Activated CD4-positive, alpha-beta T cell treated with anti-CD3 and anti-CD28 coated beads, Interleukin-2, amount 10 ng/mL, durations not matched to agents 24 days and 14 days (primary cell): ENCODE measurements at regions of chr11 and their contacts with region 1.

Region 1: GRCh38 chr11:85718991-85719807 is 33.2 kb upstream of the CCDC89 start:
- DNase-seq: no peak
- H3K4me3 Mint-ChIP-seq: no peak overlapping the region
- H3K27ac Mint-ChIP-seq: no peak overlapping the region
- H3K4me1 Mint-ChIP-seq: peaks cover 5% of the 10 kb centered on the region
- H3K27me3 Mint-ChIP-seq: no peaks in the 10 kb centered on the region

Region 2: GRCh38 chr11:84673753-84674152 is 1045.4 kb before region 1 on chr11:
- intact Hi-C with region 1: loop called (anchors 10 kb)
- DNase-seq: no peak
- H3K4me3 Mint-ChIP-seq: no peak overlapping the region
- H3K27ac Mint-ChIP-seq: no peak overlapping the region
- H3K4me1 Mint-ChIP-seq: no peaks in the 10 kb centered on the region
- H3K27me3 Mint-ChIP-seq: no peaks in the 10 kb centered on the region

Region 3: DNA sequence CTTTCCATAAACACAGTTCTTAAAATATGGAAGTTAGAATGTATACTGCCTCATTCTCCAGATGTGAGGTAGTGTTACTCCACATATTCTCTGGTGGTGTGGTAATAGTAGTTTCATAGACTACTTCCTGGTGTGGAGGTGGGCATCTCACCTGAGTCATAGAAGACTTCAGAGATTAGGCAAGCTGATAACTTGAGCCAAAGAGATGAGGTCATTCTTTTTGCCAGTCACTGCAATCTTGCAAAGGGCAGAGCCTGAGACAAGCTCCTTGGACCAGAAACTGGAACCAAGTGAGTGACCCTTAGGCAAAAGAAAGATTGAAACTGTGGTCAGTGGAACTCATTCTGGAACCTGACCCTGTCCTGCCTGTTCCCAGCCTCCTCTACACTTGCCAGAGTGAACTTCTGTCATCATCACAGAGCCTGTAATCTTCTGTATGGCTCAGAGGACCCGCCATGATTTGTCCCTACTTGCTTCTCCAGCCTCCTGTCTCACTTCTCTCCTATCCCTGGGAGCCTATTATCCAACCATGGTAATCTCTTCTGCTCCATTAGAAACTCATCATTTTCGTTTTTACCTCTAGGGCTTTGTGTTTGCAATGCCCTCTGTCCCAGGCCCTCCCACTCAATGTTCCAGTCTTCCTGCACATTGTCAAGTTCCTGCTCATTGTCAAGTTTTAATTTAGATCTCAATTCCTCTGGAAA is 125.4 kb after region 1 on chr11:
- intact Hi-C with region 1: no loop called
- DNase-seq: no peak
- H3K4me3 Mint-ChIP-seq: no peak overlapping the region
- H3K27ac Mint-ChIP-seq: no peak overlapping the region
- H3K4me1 Mint-ChIP-seq: peaks cover 20% of the 10 kb centered on the region
- H3K27me3 Mint-ChIP-seq: peaks cover 2% of the 10 kb centered on the region